ENCODE measurements at regions of chr7 and their contacts with region 1.

Region 1: DNA sequence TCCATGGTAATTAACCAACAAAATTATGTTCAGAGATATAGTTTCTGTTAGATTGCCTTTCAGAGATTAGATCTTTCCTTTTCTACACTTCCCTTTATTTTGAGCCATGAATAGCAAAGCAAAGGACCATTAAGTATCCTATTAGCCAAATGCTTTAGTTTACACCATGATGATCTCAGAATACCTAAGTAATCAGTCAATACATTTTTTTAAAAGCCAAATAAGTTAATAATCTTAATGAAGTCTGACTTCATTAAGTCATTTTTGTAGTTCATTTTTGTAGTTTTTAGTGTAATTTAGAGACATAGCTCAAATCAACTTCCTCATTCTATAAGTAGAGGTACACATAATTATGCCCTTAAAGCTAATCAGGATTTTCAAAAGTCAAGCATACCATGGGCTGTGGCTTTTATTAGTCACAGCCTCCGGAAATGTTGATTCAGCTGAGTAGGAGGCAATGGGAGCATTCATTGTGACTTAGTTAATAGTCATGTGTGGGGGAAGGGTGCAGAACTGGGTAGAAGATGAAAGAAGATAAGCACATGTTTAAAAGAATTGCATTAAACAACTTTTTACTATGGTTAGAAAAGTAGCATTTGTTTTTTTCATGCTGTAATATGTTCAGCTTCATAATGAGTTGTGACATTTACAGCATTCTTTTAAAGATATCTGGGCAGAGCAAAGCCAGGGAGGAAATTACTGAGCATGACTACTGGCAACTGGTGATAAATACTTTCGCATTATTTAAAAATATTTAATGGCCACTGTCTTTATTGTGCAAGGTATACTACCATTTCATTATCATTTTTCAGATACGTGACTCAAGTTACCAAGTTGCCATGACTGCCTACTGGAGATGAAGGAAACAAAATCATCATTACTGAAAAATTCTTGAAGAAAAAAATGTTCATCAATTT is 57.3 kb upstream of the CCDC71L start:
- DNase-seq: peak; percentile 37
- H3K4me3 Mint-ChIP-seq: no peak overlapping the region
- H3K27ac Mint-ChIP-seq: no peak overlapping the region
- H3K4me1 Mint-ChIP-seq: peaks cover 11% of the 10 kb centered on the region
- H3K27me3 Mint-ChIP-seq: no peaks in the 10 kb centered on the region

Region 2: GRCh38 chr7:106504645-106505044 is 213.6 kb before region 1 on chr7:
- intact Hi-C with region 1: loop called (anchors 5 kb)
- DNase-seq: no peak
- H3K4me3 Mint-ChIP-seq: no peak overlapping the region
- H3K27ac Mint-ChIP-seq: peak overlapping the region; percentile 40
- H3K4me1 Mint-ChIP-seq: peaks cover 21% of the 10 kb centered on the region
- H3K27me3 Mint-ChIP-seq: no peaks in the 10 kb centered on the region

Region 3: GRCh38 chr7:106704000-106704840 is 14.0 kb before region 1 on chr7:
- intact Hi-C with region 1: loop called (anchors 2 kb)
- DNase-seq: no peak
- H3K4me3 Mint-ChIP-seq: no peak overlapping the region
- H3K27ac Mint-ChIP-seq: no peak overlapping the region
- H3K4me1 Mint-ChIP-seq: peaks cover 7% of the 10 kb centered on the region
- H3K27me3 Mint-ChIP-seq: no peaks in the 10 kb centered on the region

Region 4: DNA sequence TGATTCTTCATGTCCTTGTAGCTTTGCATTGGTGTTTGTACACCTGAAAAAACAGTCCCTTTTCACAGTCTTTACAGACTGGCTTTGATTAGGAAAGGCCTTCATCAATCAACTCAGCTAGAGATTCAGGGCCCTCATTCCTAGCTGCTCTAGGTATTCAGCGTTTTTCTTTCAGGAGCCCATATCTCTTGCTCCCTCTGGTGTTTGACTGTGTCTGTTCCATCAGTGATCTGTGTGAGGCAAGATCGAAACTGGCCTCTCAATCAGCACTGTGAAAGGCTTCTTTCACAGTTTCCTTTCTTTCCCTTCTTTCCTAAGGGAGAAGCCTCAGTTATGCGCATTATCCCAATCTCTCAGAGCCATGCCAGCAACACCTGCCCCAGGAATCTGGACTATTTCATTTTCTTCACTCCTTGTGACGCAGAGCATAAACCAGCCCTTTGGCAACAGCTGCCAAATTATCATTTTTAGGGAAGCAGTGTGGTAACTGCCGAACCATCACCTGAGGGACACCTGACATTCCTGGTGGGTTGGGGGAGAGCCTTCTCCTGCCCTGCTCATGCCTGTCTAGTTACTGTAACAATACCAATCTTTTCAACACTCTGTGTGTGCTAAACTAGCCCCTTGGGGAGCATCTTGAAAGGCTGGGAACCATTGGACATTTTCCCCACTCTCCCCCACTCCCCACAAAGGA is 18.4 kb after region 1 on chr7:
- intact Hi-C with region 1: loop called (anchors 1 kb)
- DNase-seq: peak; percentile 31
- H3K4me3 Mint-ChIP-seq: no peak overlapping the region
- H3K27ac Mint-ChIP-seq: no peak overlapping the region
- H3K4me1 Mint-ChIP-seq: peaks cover 32% of the 10 kb centered on the region
- H3K27me3 Mint-ChIP-seq: peaks cover 2% of the 10 kb centered on the region

Region 5: DNA sequence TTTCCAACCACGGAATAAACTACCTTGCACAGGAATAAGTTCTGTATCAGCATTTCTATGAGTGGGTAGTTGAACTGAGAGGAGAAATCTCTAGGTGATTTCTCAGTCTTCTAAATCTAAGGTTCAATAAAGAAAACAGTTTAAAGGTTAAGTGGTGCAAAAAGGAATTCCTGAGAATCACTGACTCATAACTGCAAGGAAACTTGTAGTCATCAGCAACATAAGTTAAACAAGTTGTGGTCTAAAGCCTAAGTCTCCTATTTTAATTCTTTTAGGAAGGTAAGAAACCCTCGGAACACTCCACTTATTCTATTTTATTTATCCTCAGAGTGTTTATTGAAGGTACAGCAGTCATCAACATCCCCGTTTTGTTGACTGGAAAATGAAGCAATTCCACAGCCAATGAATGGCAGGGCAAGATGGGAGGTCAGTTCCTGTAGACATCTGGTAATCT is 54.5 kb after region 1 on chr7:
- intact Hi-C with region 1: loop called (anchors 1 kb)
- DNase-seq: no peak
- H3K4me3 Mint-ChIP-seq: peak overlapping the region; percentile 47
- H3K27ac Mint-ChIP-seq: peak overlapping the region; percentile 98
- H3K4me1 Mint-ChIP-seq: peaks cover 63% of the 10 kb centered on the region
- H3K27me3 Mint-ChIP-seq: no peaks in the 10 kb centered on the region

Measured in activated T-helper 1 cell treated with anti-CD3 and anti-CD28 coated beads, Interleukin-12 subunit alpha, Interleukin-12 subunit beta, Interleukin-2, Interleukin-4 antibody, amounts not matched to agents 30 ng/mL and 10 ng/mL and 1 ng/mL, durations not matched to agents 14 hours and 24 hours and 36 hours (primary cell).